ENCODE measurements at regions of chr12 and their contacts with region 1.

Region 1: DNA sequence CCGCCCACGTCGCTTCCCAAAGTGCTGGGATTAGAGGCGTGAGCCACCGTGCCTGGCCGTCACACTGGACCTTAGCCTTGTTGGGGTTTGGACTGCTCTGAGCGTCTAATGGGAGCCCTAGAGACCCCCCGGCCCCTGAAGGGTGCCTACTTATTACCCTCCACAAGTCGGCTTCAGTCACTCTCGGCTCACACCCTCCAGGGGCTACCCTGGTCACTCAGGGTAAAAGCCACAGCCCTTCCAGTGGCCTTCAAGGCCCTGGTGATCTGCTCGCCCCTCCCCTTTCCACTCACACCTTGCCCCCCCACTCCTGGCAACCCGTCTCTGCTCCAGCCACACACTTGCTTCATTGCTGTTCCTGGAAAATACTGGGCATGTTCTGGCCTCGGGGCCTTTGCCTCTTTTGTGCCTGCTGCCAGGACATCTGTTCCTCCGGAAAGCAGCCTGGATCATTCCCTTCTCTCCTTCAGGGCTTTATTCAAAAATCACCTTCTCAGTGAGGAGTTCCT is 3.6 kb upstream of the MORN3 start:
- DNase-seq: peak in 2 of 5 donors; percentile 54 to 55
- H3K4me3 ChIP-seq: peak overlapping the region; percentile 47
- H3K27ac ChIP-seq: no peak overlapping the region
- H3K4me1 ChIP-seq: no peaks in the 10 kb centered on the region
- H3K27me3 ChIP-seq: no peaks in the 10 kb centered on the region
- CTCF ChIP-seq: no peak
- EP300 ChIP-seq: no peak
- POLR2A ChIP-seq: no peak

Region 2: GRCh38 chr12:121499929-121500793 is 172.9 kb before region 1 on chr12:
- intact Hi-C with region 1: loop called in 3 of 4 experiments (anchors 5 to 10 kb)
- DNase-seq: peak; percentile 71 to 91 (median 85)
- H3K4me3 ChIP-seq: no peak overlapping the region
- H3K27ac ChIP-seq: peak overlapping the region in 1 of 2 donors; percentile 47
- H3K4me1 ChIP-seq: no peaks in the 10 kb centered on the region
- H3K27me3 ChIP-seq: no peaks in the 10 kb centered on the region
- CTCF ChIP-seq: peak; percentile 70 to 95 (median 79)
- EP300 ChIP-seq: no peak
- POLR2A ChIP-seq: no peak

Measured in ovary (tissue), 10 donors.